ENCODE measurements at regions of chr19 and their contacts with region 1.

Region 1: DNA sequence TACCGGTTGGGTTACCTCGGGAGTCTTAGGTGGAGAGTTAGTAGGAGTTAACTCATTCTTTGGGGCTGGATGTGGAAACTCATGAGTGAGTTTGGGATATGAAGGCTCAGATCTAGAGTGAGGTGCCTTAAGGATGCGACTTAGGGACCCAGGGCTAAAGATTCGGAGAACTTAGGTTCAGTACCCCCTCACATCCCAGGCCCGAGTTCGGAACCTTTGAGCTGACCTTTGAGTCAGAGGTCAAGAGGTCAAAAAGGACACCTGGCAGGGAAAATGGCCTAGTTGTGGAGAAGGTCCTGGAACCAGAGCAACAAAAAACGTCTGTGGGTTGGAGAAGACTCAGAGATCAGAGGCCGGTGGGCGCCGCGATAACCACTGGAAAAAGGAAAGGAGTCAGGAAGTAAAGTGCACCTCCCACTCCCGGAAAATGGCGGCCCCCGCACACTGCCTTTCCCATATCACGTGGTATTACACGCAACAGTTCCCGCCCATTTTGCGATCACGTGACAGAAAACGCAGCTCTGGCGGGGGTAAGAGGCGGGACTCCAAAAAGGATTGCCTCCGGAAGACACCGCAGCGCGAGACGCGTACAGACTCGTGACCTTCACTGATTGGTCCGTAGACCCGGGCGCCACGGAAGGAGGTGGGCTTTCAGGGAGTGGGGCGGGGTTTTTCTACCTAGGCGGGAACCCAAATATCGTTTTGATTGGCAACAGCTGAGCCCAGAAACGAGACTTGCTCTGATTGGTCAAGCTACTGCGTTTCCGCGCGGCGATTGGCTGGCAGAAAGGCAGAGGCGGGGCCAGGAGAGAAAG is at the start of gene ACTMAP:
- DNase-seq: peak; percentile 100
- ATAC-seq: peak; percentile 88 to 92
- H3K4me3 ChIP-seq: peak within 1 kb of the TSS; percentile 66
- H3K27ac ChIP-seq: peak within 1 kb of the TSS; percentile 91
- H3K4me1 ChIP-seq: peaks cover 51% of the 10 kb centered on the region
- CTCF ChIP-seq: no peak
- EP300 ChIP-seq: no peak
- POLR2A ChIP-seq: peak; percentile 52; the same call in 1 of the 2 replicates
- RAD21 ChIP-seq: no peak
- polyA plus RNA-seq, gene ACTMAP: 7.8 and 11.7 TPM in 2 replicates

Region 2: GRCh38 chr19:40285353-40286234 is 464.7 kb before region 1 on chr19:
- CTCF ChIA-PET with region 1: no interaction called
- POLR2A ChIA-PET with region 1: no interaction called
- DNase-seq: peak; percentile 100
- ATAC-seq: peak; percentile 86 to 95
- H3K4me3 ChIP-seq: peak overlapping the region; percentile 86
- H3K27ac ChIP-seq: peak overlapping the region; percentile 78 to 90
- H3K4me1 ChIP-seq: peaks cover 17% of the 10 kb centered on the region
- CTCF ChIP-seq: no peak
- EP300 ChIP-seq: no peak
- POLR2A ChIP-seq: peak; percentile 74
- RAD21 ChIP-seq: no peak

Region 3: GRCh38 chr19:40650749-40651305 is 99.4 kb before region 1 on chr19:
- CTCF ChIA-PET with region 1: interaction called, 4 read pairs
- POLR2A ChIA-PET with region 1: interaction called, 13 read pairs
- DNase-seq: no peak
- ATAC-seq: no peak
- H3K4me3 ChIP-seq: no peak overlapping the region
- H3K27ac ChIP-seq: no peak overlapping the region
- H3K4me1 ChIP-seq: peaks cover 11% of the 10 kb centered on the region
- CTCF ChIP-seq: no peak
- EP300 ChIP-seq: no peak
- POLR2A ChIP-seq: no peak
- RAD21 ChIP-seq: no peak

Region 4: GRCh38 chr19:40716655-40717324 is 33.5 kb before region 1 on chr19 and contains the starts of genes COQ8B and ITPKC:
- CTCF ChIA-PET with region 1: interaction called, 199 read pairs
- POLR2A ChIA-PET with region 1: interaction called, 71 read pairs
- DNase-seq: peak; percentile 99 to 100
- ATAC-seq: peak; percentile 45 to 61
- H3K4me3 ChIP-seq: peak within 1 kb of the TSS; percentile 64
- H3K27ac ChIP-seq: peak within 1 kb of the TSS; percentile 88 to 93
- H3K4me1 ChIP-seq: peaks cover 34% of the 10 kb centered on the region
- CTCF ChIP-seq: no peak
- EP300 ChIP-seq: no peak; a peak in 1 of 5 replicates
- POLR2A ChIP-seq: peak; percentile 60
- RAD21 ChIP-seq: peak in 1 of 2 experiments; percentile 14; a peak in 2 of 5 replicates
- polyA plus RNA-seq, gene COQ8B: 43.9 and 47.2 TPM in 2 replicates
- polyA plus RNA-seq, gene ITPKC: 6.5 and 8.7 TPM in 2 replicates

Region 5: GRCh38 chr19:40735003-40735771 is 15.1 kb before region 1 on chr19:
- CTCF ChIA-PET with region 1: interaction called, 199 read pairs
- POLR2A ChIA-PET with region 1: interaction called, 11 read pairs
- DNase-seq: peak in 1 of 2 experiments; percentile 57
- ATAC-seq: no peak
- H3K4me3 ChIP-seq: no peak overlapping the region
- H3K27ac ChIP-seq: no peak overlapping the region
- H3K4me1 ChIP-seq: no peaks in the 10 kb centered on the region
- CTCF ChIP-seq: no peak
- EP300 ChIP-seq: no peak
- POLR2A ChIP-seq: no peak
- RAD21 ChIP-seq: no peak

Region 6: GRCh38 chr19:40798223-40798996 is 48.1 kb after region 1 on chr19:
- CTCF ChIA-PET with region 1: interaction called, 20 read pairs
- POLR2A ChIA-PET with region 1: interaction called, 44 read pairs
- DNase-seq: peak; percentile 99 to 100
- ATAC-seq: peak; percentile 86 to 92
- H3K4me3 ChIP-seq: peak overlapping the region; percentile 84
- H3K27ac ChIP-seq: peak overlapping the region; percentile 95 to 96
- H3K4me1 ChIP-seq: peaks cover 42% of the 10 kb centered on the region
- CTCF ChIP-seq: peak; percentile 67
- EP300 ChIP-seq: no peak
- POLR2A ChIP-seq: 0 out of 2 replicates have a peak, but pooled peaks have one; percentile 23
- RAD21 ChIP-seq: 0 out of 5 replicates have a peak, but pooled peaks have one; percentile 11 to 33

Measured in A549 (cell line).